HepG2 (cell line): ENCODE measurements at regions of chr7 and their contacts with region 1.

Region 1: DNA sequence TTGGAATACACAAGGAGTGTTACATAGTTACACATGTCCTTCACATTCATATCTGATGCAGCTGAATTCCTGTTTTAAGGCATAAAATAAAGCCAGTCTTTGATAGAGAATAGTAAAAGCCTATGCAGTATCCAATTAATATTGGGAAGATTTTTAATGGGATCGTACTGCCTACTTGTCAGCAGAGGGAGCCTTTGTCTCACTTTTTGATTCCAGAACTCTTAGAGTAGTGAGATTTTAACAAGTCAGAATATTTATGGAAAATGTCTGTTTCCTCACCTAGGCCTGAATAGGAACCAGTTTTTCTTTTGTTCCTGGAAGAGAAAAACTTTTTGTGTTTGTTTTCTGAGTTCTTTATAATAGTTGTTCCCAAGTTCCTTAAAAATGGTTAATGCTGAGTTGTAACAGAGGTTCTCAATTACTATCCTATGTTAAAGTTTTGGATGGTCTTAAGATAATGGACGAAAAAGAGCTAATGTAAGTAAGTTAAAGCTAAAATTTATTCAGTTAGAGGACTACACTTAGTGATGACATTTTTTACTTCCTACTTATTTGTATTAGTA is 114.0 kb downstream of the BBS9 start:
- DNase-seq: peak; percentile 48
- ATAC-seq: peak; percentile 73
- H3K4me3 ChIP-seq: no peak overlapping the region
- H3K27ac ChIP-seq: no peak overlapping the region
- H3K4me1 ChIP-seq: peaks cover 22% of the 10 kb centered on the region
- H3K27me3 ChIP-seq: no peaks in the 10 kb centered on the region
- CTCF ChIP-seq: peak; percentile 65
- EP300 ChIP-seq: no peak
- POLR2A ChIP-seq: no peak
- RAD21 ChIP-seq: peak; percentile 56

Region 2: DNA sequence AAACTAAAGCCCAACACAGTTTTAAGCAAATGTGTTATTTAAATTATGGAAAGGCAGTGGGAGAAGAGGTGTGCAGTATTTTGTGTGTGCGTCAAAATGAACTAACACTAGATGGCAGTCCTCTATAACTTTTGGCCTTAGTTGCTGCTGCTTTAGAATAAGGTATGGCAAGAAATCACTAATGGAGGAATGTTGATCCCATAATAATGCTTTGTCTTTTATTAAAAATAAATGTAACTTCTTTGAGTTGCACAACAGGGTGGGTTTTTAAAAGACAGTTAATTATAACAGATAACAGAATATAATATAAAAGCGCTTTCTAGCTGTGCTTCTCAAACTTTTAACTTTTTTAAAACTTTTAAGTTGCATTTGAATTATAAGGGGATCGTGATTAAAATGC is 57.6 kb before region 1 on chr7:
- CTCF ChIA-PET with region 1: interaction called, 16 read pairs
- POLR2A ChIA-PET with region 1: no interaction called
- in situ Hi-C with region 1: no loop called
- intact Hi-C with region 1: loop called (anchors 2 kb)
- DNase-seq: peak; percentile 62
- ATAC-seq: peak; percentile 85
- H3K4me3 ChIP-seq: no peak overlapping the region
- H3K27ac ChIP-seq: no peak overlapping the region
- H3K4me1 ChIP-seq: peaks cover 7% of the 10 kb centered on the region
- H3K27me3 ChIP-seq: no peaks in the 10 kb centered on the region; a peak in 1 of 5 replicates
- CTCF ChIP-seq: peak; percentile 84
- EP300 ChIP-seq: no peak
- POLR2A ChIP-seq: no peak
- RAD21 ChIP-seq: peak; percentile 76

Region 3: GRCh38 chr7:33351709-33352108 is 108.3 kb after region 1 on chr7:
- CTCF ChIA-PET with region 1: no interaction called
- POLR2A ChIA-PET with region 1: no interaction called
- in situ Hi-C with region 1: no loop called
- intact Hi-C with region 1: no loop called
- DNase-seq: no peak
- ATAC-seq: no peak
- H3K4me3 ChIP-seq: no peak overlapping the region
- H3K27ac ChIP-seq: no peak overlapping the region
- H3K4me1 ChIP-seq: no peaks in the 10 kb centered on the region
- H3K27me3 ChIP-seq: no peaks in the 10 kb centered on the region
- CTCF ChIP-seq: no peak
- EP300 ChIP-seq: no peak
- POLR2A ChIP-seq: no peak
- RAD21 ChIP-seq: no peak

Region 4: GRCh38 chr7:33744293-33745075 is 501.1 kb after region 1 on chr7:
- CTCF ChIA-PET with region 1: interaction called, 10 read pairs
- POLR2A ChIA-PET with region 1: no interaction called
- in situ Hi-C with region 1: no loop called
- intact Hi-C with region 1: no loop called
- DNase-seq: peak; percentile 58
- ATAC-seq: peak; percentile 75
- H3K4me3 ChIP-seq: no peak overlapping the region
- H3K27ac ChIP-seq: no peak overlapping the region
- H3K4me1 ChIP-seq: peaks cover 10% of the 10 kb centered on the region
- H3K27me3 ChIP-seq: no peaks in the 10 kb centered on the region
- CTCF ChIP-seq: peak; percentile 58
- EP300 ChIP-seq: no peak
- POLR2A ChIP-seq: no peak
- RAD21 ChIP-seq: peak; percentile 22; the same call in 1 of the 2 replicates

Region 5: GRCh38 chr7:33774762-33775523 is 531.5 kb after region 1 on chr7:
- CTCF ChIA-PET with region 1: no interaction called
- POLR2A ChIA-PET with region 1: no interaction called
- in situ Hi-C with region 1: no loop called
- intact Hi-C with region 1: no loop called
- DNase-seq: no peak
- ATAC-seq: no peak
- H3K4me3 ChIP-seq: no peak overlapping the region
- H3K27ac ChIP-seq: no peak overlapping the region
- H3K4me1 ChIP-seq: no peaks in the 10 kb centered on the region
- H3K27me3 ChIP-seq: 0 out of 5 replicates have a peak, but pooled peaks cover 0 to 2% of the 10 kb centered on the region in 2 experiments
- CTCF ChIP-seq: no peak
- EP300 ChIP-seq: no peak
- POLR2A ChIP-seq: no peak
- RAD21 ChIP-seq: no peak

Region 6: DNA sequence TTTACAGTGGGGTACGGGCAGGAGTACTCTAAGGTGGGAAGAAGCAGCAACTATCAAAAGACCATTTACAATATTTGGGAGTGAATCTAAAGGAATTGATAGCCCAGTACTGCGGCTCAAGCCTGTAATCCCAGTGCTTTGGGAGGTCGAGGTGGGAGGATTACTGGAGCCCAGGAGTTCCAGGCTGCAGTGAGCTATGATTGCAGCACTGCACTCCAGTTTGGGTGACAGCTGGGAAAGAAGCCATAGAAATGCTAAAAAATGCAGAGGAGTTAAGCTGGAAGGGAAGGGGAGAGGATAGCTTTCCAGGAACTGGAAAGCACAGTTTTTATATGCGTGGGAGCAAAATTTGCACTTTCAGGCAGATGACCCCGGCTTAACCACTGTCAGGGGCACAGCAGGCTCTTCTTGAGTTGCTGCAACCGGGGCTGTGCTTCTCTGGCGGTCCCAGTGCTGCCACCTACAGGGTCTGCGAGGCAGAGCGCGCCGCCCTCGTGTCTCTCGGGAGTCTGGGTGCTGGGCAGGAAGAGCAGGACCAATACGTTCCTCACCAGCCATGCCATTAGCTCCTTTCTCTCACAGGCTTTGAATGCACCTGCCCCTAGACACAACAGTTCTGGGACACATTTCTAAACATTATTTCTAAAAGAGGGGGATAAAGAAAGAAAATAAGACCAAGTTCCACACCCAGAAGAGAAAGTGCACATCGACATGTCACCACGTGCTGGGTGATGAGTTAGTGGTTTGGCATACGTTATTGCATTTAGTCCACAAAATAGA is 651.8 kb after region 1 on chr7:
- CTCF ChIA-PET with region 1: interaction called, 5 read pairs
- POLR2A ChIA-PET with region 1: no interaction called
- in situ Hi-C with region 1: no loop called
- intact Hi-C with region 1: loop called (anchors 2 kb)
- DNase-seq: peak; percentile 41
- ATAC-seq: peak; percentile 99
- H3K4me3 ChIP-seq: no peak overlapping the region
- H3K27ac ChIP-seq: no peak overlapping the region
- H3K4me1 ChIP-seq: no peaks in the 10 kb centered on the region
- H3K27me3 ChIP-seq: peaks cover 2 to 42% of the 10 kb centered on the region in 2 experiments; a peak in 2 of 5 replicates
- CTCF ChIP-seq: peak; percentile 89
- EP300 ChIP-seq: no peak
- POLR2A ChIP-seq: no peak
- RAD21 ChIP-seq: no peak

Region 7: DNA sequence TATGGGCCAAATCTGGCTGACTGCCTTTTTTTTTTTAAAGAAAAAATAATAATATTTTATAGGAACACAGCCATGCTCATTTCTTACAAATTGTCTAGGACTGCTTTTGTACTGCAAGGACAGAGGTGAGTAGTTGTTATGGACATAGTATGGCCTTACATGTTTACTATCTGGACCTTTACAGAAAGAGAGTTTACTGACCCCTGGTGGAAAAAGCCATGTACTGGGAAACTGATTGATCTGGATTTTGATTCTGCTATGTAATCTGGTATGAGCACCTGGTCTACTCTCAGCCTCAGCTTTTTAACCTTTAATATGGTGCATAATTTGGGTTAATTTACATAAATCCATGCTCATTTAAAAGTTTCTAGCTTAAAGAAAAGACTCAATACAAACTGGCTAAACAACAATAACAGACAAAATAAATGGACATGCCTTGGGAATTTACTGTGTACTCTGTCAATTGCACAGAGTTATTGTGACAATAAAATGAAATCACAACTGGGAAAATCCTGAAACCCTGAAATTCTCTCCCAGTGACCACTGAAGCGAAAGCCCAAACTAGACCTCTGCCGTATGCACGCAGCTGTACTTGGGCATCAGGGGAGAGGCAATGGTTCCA is 922.6 kb after region 1 on chr7:
- CTCF ChIA-PET with region 1: no interaction called
- POLR2A ChIA-PET with region 1: no interaction called
- in situ Hi-C with region 1: no loop called
- intact Hi-C with region 1: loop called (anchors 5 kb)
- DNase-seq: peak; percentile 25
- ATAC-seq: peak; percentile 79
- H3K4me3 ChIP-seq: no peak overlapping the region
- H3K27ac ChIP-seq: no peak overlapping the region
- H3K4me1 ChIP-seq: no peaks in the 10 kb centered on the region
- H3K27me3 ChIP-seq: no peaks in the 10 kb centered on the region
- CTCF ChIP-seq: peak; percentile 59
- EP300 ChIP-seq: no peak
- POLR2A ChIP-seq: no peak
- RAD21 ChIP-seq: no peak